ENCODE measurements at regions of chr1 and their contacts with region 1.

Region 1: GRCh38 chr1:151820940-151821339 is 10.7 kb downstream of the RORC start:
- DNase-seq: no peak
- H3K4me3 Mint-ChIP-seq: no peak overlapping the region
- H3K27ac Mint-ChIP-seq: peak overlapping the region; percentile 43
- H3K4me1 Mint-ChIP-seq: peaks cover 64% of the 10 kb centered on the region
- H3K27me3 Mint-ChIP-seq: no peaks in the 10 kb centered on the region

Region 2: DNA sequence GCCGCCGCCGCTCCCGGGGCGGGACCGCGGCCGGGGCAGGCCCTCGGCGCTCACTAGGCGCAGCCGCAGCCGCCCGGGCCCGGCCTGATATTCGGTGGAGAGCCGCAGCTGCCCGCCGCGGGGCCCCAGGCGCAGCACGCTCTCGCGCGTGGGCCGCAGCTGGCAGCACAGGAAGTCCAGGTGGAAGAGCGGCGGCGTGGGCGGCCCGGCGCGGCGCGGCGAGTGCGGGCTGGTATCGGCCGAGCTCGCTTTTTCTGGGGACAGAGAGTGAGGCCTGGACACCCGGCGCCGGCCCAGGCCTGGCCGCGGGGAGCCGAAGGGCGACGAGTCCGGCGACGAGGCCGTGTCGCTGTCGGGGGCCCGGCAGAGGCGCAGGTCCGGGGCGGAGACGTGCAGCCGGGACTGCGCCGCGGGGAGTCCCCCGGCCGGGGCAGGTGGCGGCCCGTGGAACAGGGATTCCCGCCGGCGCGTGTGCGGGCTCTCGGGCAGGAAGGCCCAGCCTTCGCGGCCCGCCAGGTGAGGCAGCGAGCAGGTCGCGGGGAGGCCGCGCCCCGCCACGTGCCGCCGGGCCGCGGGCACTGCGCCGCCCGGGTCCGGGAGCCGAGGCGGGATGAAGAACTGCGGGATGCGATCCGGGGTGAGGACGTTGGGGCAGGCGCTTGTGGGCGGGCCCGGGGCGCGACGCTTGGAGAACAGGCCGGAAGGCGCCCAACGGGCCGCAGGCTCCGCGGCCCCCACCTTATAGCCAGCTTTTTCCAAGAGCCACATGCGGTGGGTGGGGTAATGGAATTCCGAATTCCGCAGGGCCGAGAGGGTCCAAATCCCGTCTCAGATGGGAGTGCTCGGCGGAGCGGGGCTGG is 17.5 kb after region 1 on chr1:
- CTCF ChIA-PET with region 1: interaction called, 18 read pairs
- POLR2A ChIA-PET with region 1: no interaction called
- DNase-seq: no peak
- H3K4me3 Mint-ChIP-seq: peak overlapping the region; percentile 68
- H3K27ac Mint-ChIP-seq: peak overlapping the region; percentile 82
- H3K4me1 Mint-ChIP-seq: peaks cover 63% of the 10 kb centered on the region
- H3K27me3 Mint-ChIP-seq: peaks cover 4% of the 10 kb centered on the region